CD4-positive, alpha-beta memory T cell (primary cell): ENCODE measurements at regions of chr12 and their contacts with region 1.

Region 1: DNA sequence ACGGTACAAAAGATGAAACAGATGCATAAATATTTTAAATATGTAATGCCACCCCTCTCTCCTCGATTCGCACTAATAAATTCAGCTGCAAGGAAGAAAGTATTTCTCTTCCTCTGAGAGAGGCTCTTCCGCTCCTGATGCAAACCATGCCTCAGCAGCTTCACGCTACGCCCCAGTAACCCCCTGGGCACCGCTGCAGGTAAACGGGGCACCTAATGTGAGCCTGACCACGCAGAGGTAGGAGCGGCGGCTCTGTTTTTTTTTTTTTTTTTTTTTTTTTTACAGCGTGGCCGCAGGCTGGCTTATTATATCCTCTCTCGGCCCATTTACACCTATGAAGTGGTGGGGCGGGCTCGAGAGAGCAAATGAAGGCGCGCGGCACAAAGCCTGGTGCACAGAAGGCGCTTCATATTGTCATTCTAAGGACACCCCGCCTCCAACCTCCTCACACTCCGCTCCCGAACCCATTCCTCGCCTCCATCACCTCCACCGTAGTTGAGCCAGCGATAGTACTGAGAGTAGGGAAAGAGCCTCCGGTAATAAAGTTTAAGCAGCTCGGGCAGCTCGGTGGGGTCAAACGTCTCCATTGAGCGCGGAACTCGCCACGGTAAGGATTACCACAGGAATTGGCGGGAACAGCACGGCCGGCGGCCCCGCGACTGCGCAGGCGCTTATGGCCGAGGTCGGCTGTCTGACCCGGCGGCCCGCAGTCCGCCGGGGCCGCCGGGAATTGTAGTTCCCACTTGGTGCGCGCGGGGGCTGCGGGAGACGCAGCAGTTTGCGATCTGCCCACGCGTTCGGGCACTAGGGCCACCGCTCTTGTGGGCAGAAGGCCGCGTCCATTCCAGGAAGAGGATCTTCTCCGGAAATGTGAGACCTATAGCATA is at the start of gene PRIM1:
- DNase-seq: peak; percentile 80 to 83 (median 82)
- H3K4me3 ChIP-seq: peak within 1 kb of the TSS; percentile 80 to 92
- H3K4me3 Mint-ChIP-seq: peak within 1 kb of the TSS; percentile 96 to 99 (median 98)
- H3K27ac ChIP-seq: peak within 1 kb of the TSS; percentile 82
- H3K27ac Mint-ChIP-seq: peak within 1 kb of the TSS; percentile 94 to 98 (median 96)
- H3K4me1 ChIP-seq: peaks cover 10% of the 10 kb centered on the region
- H3K4me1 Mint-ChIP-seq: peaks cover 20 to 43% (median 28%) of the 10 kb centered on the region in 4 donors
- H3K27me3 ChIP-seq: no peaks in the 10 kb centered on the region
- H3K27me3 Mint-ChIP-seq: no peaks in the 10 kb centered on the region
- total RNA-seq, gene PRIM1: 30.2 to 34.3 TPM

Region 2: GRCh38 chr12:56230432-56231183 is 521.3 kb before region 1 on chr12:
- CTCF ChIA-PET with region 1: no interaction called
- POLR2A ChIA-PET with region 1: no interaction called
- intact Hi-C with region 1: no loop called
- DNase-seq: no peak
- H3K4me3 ChIP-seq: no peak overlapping the region
- H3K4me3 Mint-ChIP-seq: no peak overlapping the region
- H3K27ac ChIP-seq: no peak overlapping the region
- H3K27ac Mint-ChIP-seq: peak overlapping the region in 2 of 7 donors; percentile 17 to 32
- H3K4me1 ChIP-seq: peaks cover 3% of the 10 kb centered on the region
- H3K4me1 Mint-ChIP-seq: peaks cover 0 to 4% (median under 1%) of the 10 kb centered on the region in 4 donors
- H3K27me3 ChIP-seq: no peaks in the 10 kb centered on the region
- H3K27me3 Mint-ChIP-seq: no peaks in the 10 kb centered on the region

Region 3: GRCh38 chr12:56724972-56725722 is 26.8 kb before region 1 on chr12 and contains the start of gene NACA:
- CTCF ChIA-PET with region 1: interaction called, 3 read pairs
- POLR2A ChIA-PET with region 1: interaction called, 30 read pairs
- intact Hi-C with region 1: loop called (anchors 1 kb)
- DNase-seq: peak; percentile 94 to 100 (median 98)
- H3K4me3 ChIP-seq: peak within 1 kb of the TSS; percentile 90 to 100
- H3K4me3 Mint-ChIP-seq: peak within 1 kb of the TSS; percentile 90 to 99 (median 98)
- H3K27ac ChIP-seq: peak within 1 kb of the TSS; percentile 90
- H3K27ac Mint-ChIP-seq: peak within 1 kb of the TSS; percentile 92 to 99 (median 97)
- H3K4me1 ChIP-seq: peaks cover 54% of the 10 kb centered on the region
- H3K4me1 Mint-ChIP-seq: peaks cover 41 to 66% (median 51%) of the 10 kb centered on the region in 4 donors
- H3K27me3 ChIP-seq: no peaks in the 10 kb centered on the region
- H3K27me3 Mint-ChIP-seq: no peaks in the 10 kb centered on the region
- total RNA-seq, gene NACA: 1,184 to 1,255 TPM

Region 4: GRCh38 chr12:56922031-56922430 is 170.1 kb after region 1 on chr12:
- CTCF ChIA-PET with region 1: no interaction called
- POLR2A ChIA-PET with region 1: no interaction called
- intact Hi-C with region 1: no loop called
- DNase-seq: no peak
- H3K4me3 ChIP-seq: no peak overlapping the region
- H3K4me3 Mint-ChIP-seq: no peak overlapping the region
- H3K27ac ChIP-seq: no peak overlapping the region
- H3K27ac Mint-ChIP-seq: no peak overlapping the region
- H3K4me1 ChIP-seq: no peaks in the 10 kb centered on the region
- H3K4me1 Mint-ChIP-seq: no peaks in the 10 kb centered on the region
- H3K27me3 ChIP-seq: no peaks in the 10 kb centered on the region
- H3K27me3 Mint-ChIP-seq: peaks cover 5 to 6% of the 10 kb centered on the region in 2 donors

Region 5: DNA sequence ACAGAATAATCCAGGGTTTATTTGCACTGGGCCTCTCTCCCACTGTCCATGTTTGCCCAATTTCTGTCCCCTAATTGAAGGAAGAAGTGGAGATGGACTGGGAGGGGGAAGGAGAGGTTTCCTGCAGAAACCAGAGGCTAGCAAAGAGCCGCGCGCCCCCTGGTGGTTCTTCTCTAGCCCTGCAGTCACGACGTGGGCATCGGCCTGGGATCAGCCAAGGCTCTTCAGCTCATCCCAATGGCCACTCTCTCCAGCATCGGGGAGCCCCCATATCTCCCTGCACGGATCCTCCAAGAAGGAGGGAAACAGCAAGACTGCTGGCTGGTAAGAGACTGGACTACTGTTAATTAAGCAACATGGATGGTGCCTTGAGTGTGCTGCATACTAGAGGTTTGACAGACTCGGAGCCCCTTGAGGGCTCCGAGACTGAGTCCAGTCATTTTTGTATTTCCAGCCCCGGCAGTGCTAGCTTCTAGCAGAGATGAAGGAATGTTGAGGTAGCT is 235.6 kb after region 1 on chr12:
- CTCF ChIA-PET with region 1: interaction called, 102 read pairs
- POLR2A ChIA-PET with region 1: no interaction called
- intact Hi-C with region 1: loop called (anchors 1 kb)
- DNase-seq: peak; percentile 62 to 67 (median 63)
- H3K4me3 ChIP-seq: no peak overlapping the region
- H3K4me3 Mint-ChIP-seq: peak overlapping the region in 3 of 8 donors; percentile 36 to 61 (median 56)
- H3K27ac ChIP-seq: no peak overlapping the region
- H3K27ac Mint-ChIP-seq: peak overlapping the region in 1 of 7 donors; percentile 53
- H3K4me1 ChIP-seq: peaks cover 19% of the 10 kb centered on the region
- H3K4me1 Mint-ChIP-seq: peaks cover 5 to 12% (median 11%) of the 10 kb centered on the region in 4 donors
- H3K27me3 ChIP-seq: no peaks in the 10 kb centered on the region
- H3K27me3 Mint-ChIP-seq: no peaks in the 10 kb centered on the region

Region 6: DNA sequence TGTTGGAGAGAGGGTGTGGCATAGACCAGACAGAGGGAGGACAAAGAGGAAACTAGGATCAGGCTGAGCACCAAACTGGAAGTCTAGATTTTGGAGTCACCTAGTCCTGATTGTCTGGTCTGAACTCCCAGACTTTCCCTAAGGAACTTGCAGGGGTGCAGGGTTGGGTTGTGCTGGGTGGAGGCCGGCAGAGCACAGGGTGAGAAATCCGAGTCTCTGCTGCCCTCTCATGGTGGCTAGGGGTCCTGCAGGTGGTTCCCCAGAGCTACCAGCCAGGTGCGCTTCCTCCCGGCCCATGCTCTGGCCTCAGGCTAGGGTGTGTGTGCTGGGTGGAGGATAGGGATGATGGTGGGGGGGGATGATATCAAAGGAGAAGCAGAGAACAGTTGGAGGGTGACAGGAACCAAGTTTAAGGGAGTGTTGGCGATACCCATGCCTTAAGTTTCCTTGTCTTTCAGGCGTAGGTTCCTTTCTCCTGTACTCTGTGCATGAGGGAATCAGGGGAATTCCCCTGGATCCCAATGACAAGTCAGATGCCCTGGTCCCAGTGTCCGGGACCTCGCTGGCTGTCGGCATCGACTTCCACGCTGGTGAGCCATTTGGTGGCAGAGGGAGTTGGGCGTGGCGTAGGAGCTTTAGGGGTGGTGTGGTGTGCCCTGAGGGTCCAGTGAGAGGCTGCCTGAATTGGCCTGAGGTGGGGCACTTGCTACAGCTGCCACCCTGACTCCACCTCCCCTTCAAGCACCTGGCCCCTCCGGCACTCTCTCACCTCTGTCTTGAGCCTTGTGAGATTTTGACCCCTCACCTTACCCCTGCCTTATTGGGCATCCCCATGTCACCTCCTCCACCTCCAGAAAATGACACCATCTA is 431.2 kb after region 1 on chr12:
- CTCF ChIA-PET with region 1: interaction called, 3 read pairs
- POLR2A ChIA-PET with region 1: no interaction called
- intact Hi-C with region 1: loop called (anchors 1 kb)
- DNase-seq: peak; percentile 71 to 75 (median 73)
- H3K4me3 ChIP-seq: no peak overlapping the region
- H3K4me3 Mint-ChIP-seq: peak overlapping the region in 1 of 8 donors; percentile 25
- H3K27ac ChIP-seq: no peak overlapping the region
- H3K27ac Mint-ChIP-seq: peak overlapping the region in 1 of 7 donors; percentile 70
- H3K4me1 ChIP-seq: no peaks in the 10 kb centered on the region
- H3K4me1 Mint-ChIP-seq: peaks cover 2 to 7% (median 5%) of the 10 kb centered on the region in 4 donors
- H3K27me3 ChIP-seq: no peaks in the 10 kb centered on the region
- H3K27me3 Mint-ChIP-seq: peaks cover 0 to 2% of the 10 kb centered on the region in 2 donors

Region 7: GRCh38 chr12:57238854-57239554 is 487.0 kb after region 1 on chr12:
- CTCF ChIA-PET with region 1: no interaction called
- POLR2A ChIA-PET with region 1: no interaction called
- intact Hi-C with region 1: loop called (anchors 10 kb)
- DNase-seq: peak; percentile 80 to 87 (median 82)
- H3K4me3 ChIP-seq: peak overlapping the region; percentile 42 to 79
- H3K4me3 Mint-ChIP-seq: peak overlapping the region; percentile 90 to 98 (median 94)
- H3K27ac ChIP-seq: no peak overlapping the region
- H3K27ac Mint-ChIP-seq: peak overlapping the region in 6 of 7 donors; percentile 7 to 85 (median 62)
- H3K4me1 ChIP-seq: peaks cover 87% of the 10 kb centered on the region
- H3K4me1 Mint-ChIP-seq: peaks cover 41 to 88% (median 60%) of the 10 kb centered on the region in 4 donors
- H3K27me3 ChIP-seq: peaks cover 43% of the 10 kb centered on the region
- H3K27me3 Mint-ChIP-seq: peaks cover 32 to 52% of the 10 kb centered on the region in 2 donors